ENCODE measurements at regions of chr21 and their contacts with region 1.

Region 1: GRCh38 chr21:16082038-16082816 is 352.4 kb downstream of the USP25 start:
- DNase-seq: no peak
- H3K4me3 ChIP-seq: no peak overlapping the region
- CTCF ChIP-seq: no peak

Region 2: DNA sequence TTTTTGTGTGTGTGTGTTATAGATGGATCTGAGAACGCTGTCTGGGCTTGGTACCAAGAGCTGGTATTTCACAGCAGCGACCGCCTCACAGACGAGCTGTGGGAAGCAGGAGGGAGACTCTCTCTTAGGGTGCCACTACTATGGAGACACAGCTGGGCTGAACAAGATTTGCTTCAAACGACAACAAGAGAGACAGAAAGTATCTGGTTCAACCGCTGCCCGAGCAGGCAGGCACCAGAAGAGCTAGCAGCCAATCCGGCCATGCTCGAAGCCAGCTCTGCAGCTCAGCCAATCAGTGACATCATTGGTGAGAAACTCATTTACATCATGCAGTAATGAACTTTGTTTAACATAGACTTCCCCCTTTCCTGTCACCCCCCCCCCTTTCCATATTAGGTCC is 11.1 kb before region 1 on chr21:
- CTCF ChIA-PET with region 1: interaction called, 47 read pairs
- POLR2A ChIA-PET with region 1: no interaction called
- DNase-seq: no peak
- H3K4me3 ChIP-seq: peak overlapping the region; percentile 59
- CTCF ChIP-seq: no peak

Region 3: DNA sequence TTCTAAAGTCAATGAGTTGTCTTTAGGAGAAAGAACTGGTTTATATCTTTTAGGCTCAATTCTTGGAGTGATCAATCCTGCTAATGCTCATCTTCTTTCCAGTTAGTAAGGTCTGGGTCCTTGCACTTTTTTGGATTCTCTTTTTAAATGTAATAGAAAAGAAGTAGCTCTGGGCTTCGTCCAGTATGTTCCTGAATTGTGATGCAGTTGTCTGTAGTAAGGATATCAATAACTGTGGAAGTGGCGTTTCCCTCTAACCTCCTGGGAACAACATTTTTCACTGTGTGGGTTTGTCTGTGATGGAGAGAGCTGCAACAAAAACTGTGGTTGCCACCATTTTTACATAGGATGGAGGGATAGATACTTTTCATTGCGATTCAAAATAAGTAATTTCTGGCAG is 14.8 kb after region 1 on chr21:
- CTCF ChIA-PET with region 1: interaction called, 29 read pairs
- POLR2A ChIA-PET with region 1: no interaction called
- DNase-seq: no peak
- H3K4me3 ChIP-seq: no peak overlapping the region
- CTCF ChIP-seq: no peak